ENCODE measurements at regions of chr18 and their contacts with region 1.

Region 1: DNA sequence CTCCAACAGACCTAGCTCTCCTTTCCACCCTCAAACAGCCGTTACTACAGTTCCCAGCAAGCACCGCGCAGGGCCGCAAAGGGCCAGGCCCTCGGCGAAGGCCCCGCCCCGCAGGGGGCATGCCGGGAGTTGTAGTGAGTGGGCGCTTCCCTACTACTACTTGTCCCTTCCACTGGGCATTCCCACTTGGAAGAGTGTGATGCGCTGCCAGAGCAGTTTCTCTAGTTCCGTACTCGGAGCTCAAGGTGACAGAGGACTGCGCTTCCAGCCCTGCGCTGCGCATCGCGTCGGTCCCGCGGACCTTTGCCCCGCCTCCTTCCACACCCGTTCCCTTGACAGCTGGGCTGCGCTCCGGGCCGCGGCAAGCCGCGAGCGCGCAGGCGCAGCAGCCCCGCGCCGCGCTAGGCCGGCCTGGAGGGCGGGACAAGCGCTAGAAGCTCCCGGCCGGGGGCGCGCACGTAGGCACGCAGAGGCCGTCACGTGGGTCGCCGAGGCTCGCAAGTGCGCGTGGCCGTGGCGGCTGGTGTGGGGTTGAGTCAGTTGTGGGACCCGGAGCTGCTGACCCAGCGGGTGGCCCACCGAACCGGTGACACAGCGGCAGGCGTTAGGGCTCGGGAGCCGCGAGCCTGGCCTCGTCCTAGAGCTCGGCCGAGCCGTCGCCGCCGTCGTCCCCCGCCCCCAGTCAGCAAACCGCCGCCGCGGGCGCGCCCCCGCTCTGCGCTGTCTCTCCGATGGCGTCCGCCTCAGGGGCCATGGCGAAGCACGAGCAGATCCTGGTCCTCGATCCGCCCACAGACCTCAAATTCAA is at the start of gene VAPA:
- DNase-seq: peak; percentile 93
- H3K4me3 Mint-ChIP-seq: peak within 1 kb of the TSS; percentile 91
- H3K27ac Mint-ChIP-seq: peak within 1 kb of the TSS; percentile 96
- H3K4me1 Mint-ChIP-seq: peaks cover 13% of the 10 kb centered on the region
- H3K27me3 Mint-ChIP-seq: no peaks in the 10 kb centered on the region
- CTCF ChIP-seq: no peak
- total RNA-seq, gene VAPA: 247 and 286 TPM in 2 replicates

Region 2: GRCh38 chr18:9683407-9684396 is 230.0 kb before region 1 on chr18:
- CTCF ChIA-PET with region 1: no interaction called
- POLR2A ChIA-PET with region 1: interaction called, 7 read pairs
- intact Hi-C with region 1: loop called (anchors 10 kb)
- DNase-seq: peak; percentile 84
- H3K4me3 Mint-ChIP-seq: no peak overlapping the region
- H3K27ac Mint-ChIP-seq: no peak overlapping the region
- H3K4me1 Mint-ChIP-seq: peaks cover 11% of the 10 kb centered on the region
- H3K27me3 Mint-ChIP-seq: no peaks in the 10 kb centered on the region
- CTCF ChIP-seq: peak; percentile 48

Region 3: GRCh38 chr18:9827641-9828505 is 85.9 kb before region 1 on chr18:
- CTCF ChIA-PET with region 1: no interaction called
- POLR2A ChIA-PET with region 1: interaction called, 57 read pairs
- intact Hi-C with region 1: loop called (anchors 2 kb)
- DNase-seq: peak; percentile 100
- H3K4me3 Mint-ChIP-seq: peak overlapping the region; percentile 60
- H3K27ac Mint-ChIP-seq: peak overlapping the region; percentile 84
- H3K4me1 Mint-ChIP-seq: peaks cover 35% of the 10 kb centered on the region
- H3K27me3 Mint-ChIP-seq: no peaks in the 10 kb centered on the region
- CTCF ChIP-seq: no peak

Region 4: DNA sequence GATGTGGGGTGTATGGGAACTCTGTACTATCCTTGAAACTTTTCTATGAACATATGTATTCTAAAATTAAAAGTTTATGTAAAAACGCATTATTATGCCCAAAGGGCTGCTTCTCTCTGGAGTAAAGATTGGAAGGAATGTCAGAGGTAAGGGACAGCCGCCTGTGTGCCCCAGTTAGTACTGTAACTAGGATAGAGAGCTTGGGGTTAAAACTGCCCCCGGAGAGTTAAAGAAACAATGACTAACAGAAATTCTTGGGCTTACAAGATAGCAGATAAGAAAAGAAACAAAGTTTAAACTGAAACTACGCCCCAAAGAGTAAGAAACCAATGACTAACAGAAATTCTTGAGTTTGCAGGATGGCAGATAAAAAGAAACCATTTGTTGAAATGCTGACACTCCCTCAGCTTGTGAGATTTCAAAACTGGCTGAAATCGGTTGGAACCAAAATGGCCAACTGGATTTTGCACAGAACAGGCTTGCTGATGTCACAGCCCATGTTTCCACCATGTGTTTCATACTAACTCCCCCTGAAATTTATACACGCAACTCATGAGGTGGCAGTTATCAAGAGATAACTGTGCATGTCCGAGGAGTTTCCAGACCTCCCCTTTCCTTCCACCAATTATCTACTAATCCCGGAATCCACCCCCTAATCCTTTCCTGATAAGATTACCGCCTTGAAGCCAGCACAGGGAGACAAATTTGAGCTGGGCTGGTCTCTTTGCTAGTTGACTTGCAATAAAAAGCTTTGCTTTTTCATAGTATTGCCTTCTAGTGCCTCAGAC is 36.7 kb before region 1 on chr18:
- CTCF ChIA-PET with region 1: no interaction called
- POLR2A ChIA-PET with region 1: interaction called, 41 read pairs
- intact Hi-C with region 1: loop called (anchors 5 kb)
- DNase-seq: peak; percentile 59
- H3K4me3 Mint-ChIP-seq: peak overlapping the region; percentile 53
- H3K27ac Mint-ChIP-seq: peak overlapping the region; percentile 60
- H3K4me1 Mint-ChIP-seq: peaks cover 12% of the 10 kb centered on the region
- H3K27me3 Mint-ChIP-seq: no peaks in the 10 kb centered on the region
- CTCF ChIP-seq: no peak

Region 5: GRCh38 chr18:9943311-9943710 is 29.6 kb after region 1 on chr18:
- CTCF ChIA-PET with region 1: no interaction called
- POLR2A ChIA-PET with region 1: interaction called, 13 read pairs
- intact Hi-C with region 1: no loop called
- DNase-seq: no peak
- H3K4me3 Mint-ChIP-seq: no peak overlapping the region
- H3K27ac Mint-ChIP-seq: no peak overlapping the region
- H3K4me1 Mint-ChIP-seq: no peaks in the 10 kb centered on the region
- H3K27me3 Mint-ChIP-seq: no peaks in the 10 kb centered on the region
- CTCF ChIP-seq: no peak

Measured in MCF 10A (cell line).